Left cardiac atrium (tissue), 4 donors: ENCODE measurements at regions of chr2 and their contacts with region 1.

Region 1: DNA sequence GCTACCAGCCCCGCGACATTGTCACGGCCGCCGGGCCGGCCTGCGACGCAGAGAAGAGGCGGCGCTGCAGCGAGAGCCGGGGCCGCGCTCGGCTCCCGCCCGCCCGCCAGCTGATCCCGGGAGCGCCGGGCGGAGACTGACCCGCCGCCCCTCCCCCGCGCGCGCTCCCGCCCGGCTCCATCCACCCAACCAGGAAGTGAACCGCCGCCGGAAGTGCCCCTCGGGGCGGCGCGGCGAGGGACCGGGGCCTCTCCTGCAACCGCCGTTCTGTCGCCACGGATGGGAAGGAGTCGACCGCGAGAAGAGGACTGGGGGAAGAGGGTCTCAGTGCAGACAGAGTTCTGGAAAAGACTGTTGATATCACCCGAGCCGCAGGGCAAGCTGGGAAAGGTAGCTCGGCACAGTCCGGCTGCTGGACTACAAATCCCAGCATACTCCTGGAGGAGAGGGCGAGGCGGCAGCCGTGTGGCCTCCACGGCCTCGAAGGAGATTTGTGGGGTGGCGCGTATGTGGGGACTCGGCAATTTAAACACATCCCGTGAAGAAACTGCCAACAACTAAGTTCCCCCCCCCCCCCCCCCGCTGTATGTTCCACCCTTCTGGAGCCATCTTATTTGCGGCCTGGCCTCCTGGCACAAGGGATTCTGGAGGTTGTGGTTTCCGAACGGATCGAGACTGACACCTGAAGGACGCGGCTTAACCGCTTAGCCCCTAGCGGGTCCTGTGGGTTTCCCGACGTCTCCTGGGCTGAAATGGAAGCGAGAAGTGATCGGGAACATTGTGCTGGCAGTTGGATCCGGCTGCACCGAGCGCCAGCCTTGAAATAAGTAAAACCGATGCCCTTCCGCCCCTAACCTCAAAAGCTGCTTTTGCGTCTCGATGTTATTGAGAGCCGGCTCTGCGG is at the start of gene AAK1:
- DNase-seq: peak; percentile 94
- ATAC-seq: peak; percentile 96 to 97
- total RNA-seq, gene AAK1: 44.0 to 64.7 TPM

Region 2: GRCh38 chr2:69565431-69565839 is 78.4 kb before region 1 on chr2:
- intact Hi-C with region 1: loop called (anchors 5 to 10 kb)
- DNase-seq: peak; percentile 54
- ATAC-seq: peak; percentile 55 to 65

Region 3: DNA sequence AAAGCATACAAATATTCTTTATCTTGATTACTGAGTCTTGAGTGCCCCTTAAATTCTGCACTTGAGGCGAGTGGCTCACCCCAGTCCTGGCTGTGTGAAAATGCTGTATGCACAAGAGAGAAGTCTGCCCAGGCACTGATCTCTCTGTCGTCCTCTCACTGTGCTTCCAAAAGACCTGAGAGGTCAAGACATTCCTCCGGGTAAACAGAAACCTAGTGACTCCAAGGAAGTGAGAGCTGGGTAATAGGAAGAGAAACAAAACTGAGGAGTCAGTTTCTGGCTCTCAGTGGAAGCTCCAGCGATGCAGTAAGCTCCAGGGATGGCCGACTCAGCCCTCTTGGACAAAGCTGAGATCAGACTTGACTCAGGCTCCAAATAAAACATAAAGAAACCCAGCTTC is 71.2 kb before region 1 on chr2:
- intact Hi-C with region 1: loop called (anchors 5 to 10 kb)
- DNase-seq: no peak
- ATAC-seq: peak in 1 of 2 donors; percentile 82

Region 4: DNA sequence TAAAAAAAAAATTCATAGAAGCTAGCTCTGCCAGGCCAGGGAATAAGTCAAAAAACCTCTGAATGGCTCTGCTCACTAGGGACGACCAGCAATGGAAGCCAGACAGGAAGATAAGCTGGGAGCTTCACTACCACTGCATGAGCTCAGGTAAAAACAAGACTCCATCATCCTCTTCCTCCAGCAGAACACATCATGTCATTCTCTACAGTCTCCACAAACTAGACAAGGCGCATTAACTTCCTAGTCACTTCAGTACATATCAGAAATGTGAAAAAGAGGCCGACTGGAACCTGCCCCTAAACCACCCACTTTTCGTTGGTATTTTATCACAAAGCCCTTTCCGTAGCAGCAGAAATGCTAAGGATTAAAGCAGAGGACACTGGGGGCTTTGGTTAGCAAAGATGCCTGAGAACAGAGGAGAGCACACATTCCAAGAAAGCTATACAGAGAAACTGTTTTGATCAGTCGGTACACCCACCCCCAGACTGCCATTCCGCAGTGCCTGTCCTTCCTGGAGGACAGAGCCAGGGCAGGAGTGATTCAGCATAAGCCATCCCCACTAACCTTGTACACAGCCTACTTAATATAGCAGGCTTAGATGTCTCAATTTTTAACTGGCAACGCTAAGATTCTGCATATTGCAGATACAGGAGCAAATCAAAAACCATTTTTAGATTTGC is 53.7 kb before region 1 on chr2:
- intact Hi-C with region 1: no loop called
- DNase-seq: no peak
- ATAC-seq: peak; percentile 73 to 86

Region 5: GRCh38 chr2:69601179-69601612 is 42.7 kb before region 1 on chr2:
- intact Hi-C with region 1: loop called in 1 of 2 experiments (anchors 5 kb)
- DNase-seq: no peak
- ATAC-seq: peak; percentile 69 to 91